Naive thymus-derived CD4-positive, alpha-beta T cell (primary cell): ENCODE measurements at regions of chr9 and their contacts with region 1.

Region 1: GRCh38 chr9:133356391-133357091 is at the starts of genes SURF1 and SURF2:
- DNase-seq: peak; percentile 77 to 92 (median 87)
- ATAC-seq: peak; percentile 96
- H3K4me3 ChIP-seq: peak within 1 kb of the TSS; percentile 64
- H3K4me3 Mint-ChIP-seq: peak within 1 kb of the TSS; percentile 80 to 94 (median 89)
- H3K27ac ChIP-seq: peak within 1 kb of the TSS; percentile 91
- H3K27ac Mint-ChIP-seq: peak within 1 kb of the TSS; percentile 72 to 91 (median 84)
- H3K4me1 ChIP-seq: peaks cover 12 to 28% of the 10 kb centered on the region in 2 donors
- H3K4me1 Mint-ChIP-seq: peaks cover 20 to 42% (median 28%) of the 10 kb centered on the region in 7 donors
- H3K27me3 ChIP-seq: no peaks in the 10 kb centered on the region
- H3K27me3 Mint-ChIP-seq: no peaks in the 10 kb centered on the region
- total RNA-seq, gene SURF1: 40.5 to 53.5 (median 47.9) TPM
- total RNA-seq, gene SURF2: 15.0 to 23.5 (median 15.6) TPM

Region 2: DNA sequence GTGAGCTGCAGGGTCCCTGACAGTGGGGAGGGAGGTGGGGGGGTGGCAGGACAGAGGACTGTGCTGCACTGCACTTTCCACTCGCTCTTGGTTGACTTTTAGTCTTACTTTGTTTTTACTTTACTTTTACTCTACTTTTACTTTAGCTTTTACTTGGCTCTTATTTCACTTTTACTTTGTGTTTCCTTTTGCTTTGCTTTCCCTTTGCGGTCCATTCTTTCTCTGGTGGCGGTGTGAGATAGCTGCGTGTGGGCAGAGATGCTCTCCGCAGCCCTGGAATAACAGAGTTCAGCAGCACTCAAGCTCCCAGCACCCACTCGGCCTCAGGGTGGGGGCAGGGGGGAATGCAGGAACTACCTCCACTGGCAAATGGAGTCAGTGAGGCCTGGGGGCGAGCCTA is 483.1 kb before region 1 on chr9:
- CTCF ChIA-PET with region 1: no interaction called
- POLR2A ChIA-PET with region 1: no interaction called
- intact Hi-C with region 1: no loop called
- DNase-seq: no peak
- ATAC-seq: no peak
- H3K4me3 ChIP-seq: no peak overlapping the region
- H3K4me3 Mint-ChIP-seq: peak overlapping the region in 2 of 10 donors; percentile 21 to 32
- H3K27ac ChIP-seq: no peak overlapping the region
- H3K27ac Mint-ChIP-seq: peak overlapping the region in 2 of 9 donors; percentile 22 to 49
- H3K4me1 ChIP-seq: peaks cover 0 to 6% of the 10 kb centered on the region in 2 donors
- H3K4me1 Mint-ChIP-seq: peaks cover 0 to 8% (median 0%) of the 10 kb centered on the region in 7 donors
- H3K27me3 ChIP-seq: no peaks in the 10 kb centered on the region
- H3K27me3 Mint-ChIP-seq: peaks cover 0 to 12% (median 0%) of the 10 kb centered on the region in 5 donors

Region 3: GRCh38 chr9:133121198-133121939 is 235.2 kb before region 1 on chr9 and contains the start of gene RALGDS:
- CTCF ChIA-PET with region 1: no interaction called
- POLR2A ChIA-PET with region 1: no interaction called
- intact Hi-C with region 1: loop called in 1 of 2 experiments (anchors 5 kb)
- DNase-seq: peak; percentile 79 to 93 (median 88)
- ATAC-seq: peak; percentile 91
- H3K4me3 ChIP-seq: peak within 1 kb of the TSS; percentile 58
- H3K4me3 Mint-ChIP-seq: peak within 1 kb of the TSS; percentile 78 to 88 (median 82)
- H3K27ac ChIP-seq: peak within 1 kb of the TSS; percentile 93
- H3K27ac Mint-ChIP-seq: peak within 1 kb of the TSS; percentile 58 to 99 (median 98)
- H3K4me1 ChIP-seq: peaks cover 22 to 52% of the 10 kb centered on the region in 2 donors
- H3K4me1 Mint-ChIP-seq: peaks cover 27 to 74% (median 47%) of the 10 kb centered on the region in 7 donors
- H3K27me3 ChIP-seq: no peaks in the 10 kb centered on the region
- H3K27me3 Mint-ChIP-seq: no peaks in the 10 kb centered on the region
- total RNA-seq, gene RALGDS: 73.9 to 123 (median 79.7) TPM

Region 4: GRCh38 chr9:133342069-133342406 is 14.5 kb before region 1 on chr9:
- CTCF ChIA-PET with region 1: no interaction called
- POLR2A ChIA-PET with region 1: interaction called, 27 read pairs
- intact Hi-C with region 1: no loop called
- DNase-seq: no peak
- ATAC-seq: no peak
- H3K4me3 ChIP-seq: no peak overlapping the region
- H3K4me3 Mint-ChIP-seq: no peak overlapping the region
- H3K27ac ChIP-seq: no peak overlapping the region
- H3K27ac Mint-ChIP-seq: no peak overlapping the region
- H3K4me1 ChIP-seq: peaks cover 11 to 21% of the 10 kb centered on the region in 2 donors
- H3K4me1 Mint-ChIP-seq: peaks cover 31 to 44% (median 36%) of the 10 kb centered on the region in 7 donors
- H3K27me3 ChIP-seq: no peaks in the 10 kb centered on the region
- H3K27me3 Mint-ChIP-seq: no peaks in the 10 kb centered on the region

Region 5: GRCh38 chr9:133406480-133407307 is 50.2 kb after region 1 on chr9:
- CTCF ChIA-PET with region 1: no interaction called
- POLR2A ChIA-PET with region 1: interaction called, 3 read pairs
- intact Hi-C with region 1: loop called in 1 of 2 experiments (anchors 2 kb)
- DNase-seq: peak; percentile 59 to 78 (median 71)
- ATAC-seq: peak; percentile 94
- H3K4me3 ChIP-seq: no peak overlapping the region
- H3K4me3 Mint-ChIP-seq: no peak overlapping the region
- H3K27ac ChIP-seq: no peak overlapping the region
- H3K27ac Mint-ChIP-seq: peak overlapping the region in 7 of 9 donors; percentile 1 to 86 (median 51)
- H3K4me1 ChIP-seq: no peaks in the 10 kb centered on the region
- H3K4me1 Mint-ChIP-seq: peaks cover 2 to 14% (median 10%) of the 10 kb centered on the region in 7 donors
- H3K27me3 ChIP-seq: no peaks in the 10 kb centered on the region
- H3K27me3 Mint-ChIP-seq: no peaks in the 10 kb centered on the region

Region 6: DNA sequence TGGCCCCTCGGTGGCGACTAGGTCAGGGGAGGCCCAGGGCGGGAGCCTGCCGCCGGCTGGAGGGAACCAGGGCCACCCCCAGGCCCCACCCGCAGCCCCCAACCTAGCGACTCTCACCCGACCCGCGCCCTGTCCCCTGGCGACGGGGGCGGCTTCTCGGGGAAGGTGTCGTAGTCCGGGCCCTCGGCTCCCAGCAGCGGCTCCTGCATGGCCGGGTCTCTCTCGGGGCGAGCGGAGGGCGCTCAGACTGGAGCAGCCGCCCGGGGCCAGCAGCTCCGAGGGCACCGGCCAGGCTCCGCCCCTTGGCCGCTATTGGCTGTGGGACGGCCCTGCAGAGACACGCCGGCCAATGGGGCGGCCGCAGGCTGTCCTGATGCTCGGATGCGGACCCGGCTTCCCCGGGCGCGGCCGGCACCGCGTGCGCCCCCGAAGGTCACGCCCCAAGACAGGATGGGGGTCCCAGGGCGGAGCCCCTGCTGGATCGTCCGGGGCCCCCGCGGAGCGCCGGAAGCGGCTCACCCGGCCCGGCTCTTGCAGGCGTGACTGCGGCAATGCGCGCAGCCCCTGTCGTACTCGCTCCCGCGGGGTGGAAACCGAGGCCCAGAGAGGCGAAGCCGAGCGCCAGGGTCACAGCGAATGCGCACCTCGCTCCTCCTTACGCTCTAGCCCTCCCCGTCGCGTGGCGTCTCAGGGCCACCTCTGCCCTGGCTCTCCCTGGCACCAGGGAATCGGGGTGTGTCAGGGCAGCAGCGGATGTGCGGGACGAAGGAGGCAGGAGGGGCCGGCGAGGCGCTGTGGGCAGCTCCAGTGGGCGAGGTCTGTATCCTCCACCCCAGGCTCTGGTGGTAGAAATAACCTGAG is 122.5 kb after region 1 on chr9 and contains the start of gene SLC2A6:
- CTCF ChIA-PET with region 1: no interaction called
- POLR2A ChIA-PET with region 1: interaction called, 4 read pairs
- intact Hi-C with region 1: loop called (anchors 1 kb)
- DNase-seq: peak; percentile 64 to 87 (median 74)
- ATAC-seq: peak; percentile 96
- H3K4me3 ChIP-seq: peak within 1 kb of the TSS; percentile 77
- H3K4me3 Mint-ChIP-seq: peak within 1 kb of the TSS; percentile 50 to 83 (median 78)
- H3K27ac ChIP-seq: peak within 1 kb of the TSS; percentile 50
- H3K27ac Mint-ChIP-seq: peak within 1 kb of the TSS in 5 of 9 donors; percentile 48 to 83 (median 60)
- H3K4me1 ChIP-seq: peaks cover 0 to 12% of the 10 kb centered on the region in 2 donors
- H3K4me1 Mint-ChIP-seq: peaks cover 0 to 15% (median 10%) of the 10 kb centered on the region in 7 donors
- H3K27me3 ChIP-seq: no peaks in the 10 kb centered on the region
- H3K27me3 Mint-ChIP-seq: peaks cover 0 to 12% (median 0%) of the 10 kb centered on the region in 5 donors
- total RNA-seq, gene SLC2A6: 2.4 to 34.7 (median 3.6) TPM